Naive thymus-derived CD4-positive, alpha-beta T cell (primary cell): ENCODE measurements at regions of chr10 and their contacts with region 1.

Region 1: GRCh38 chr10:7471720-7472367 is 61.0 kb upstream of the SFMBT2 start:
- DNase-seq: peak in 4 of 9 donors; percentile 6 to 19 (median 10)
- ATAC-seq: peak; percentile 72
- H3K4me3 ChIP-seq: peak overlapping the region; percentile 62
- H3K4me3 Mint-ChIP-seq: peak overlapping the region; percentile 73 to 93 (median 88)
- H3K27ac ChIP-seq: peak overlapping the region; percentile 51
- H3K27ac Mint-ChIP-seq: peak overlapping the region in 8 of 9 donors; percentile 72 to 91 (median 85)
- H3K4me1 ChIP-seq: peaks cover 10 to 19% of the 10 kb centered on the region in 2 donors
- H3K4me1 Mint-ChIP-seq: peaks cover 23 to 55% (median 36%) of the 10 kb centered on the region in 7 donors
- H3K27me3 ChIP-seq: no peaks in the 10 kb centered on the region
- H3K27me3 Mint-ChIP-seq: peaks cover 0 to 2% (median 0%) of the 10 kb centered on the region in 5 donors

Region 2: DNA sequence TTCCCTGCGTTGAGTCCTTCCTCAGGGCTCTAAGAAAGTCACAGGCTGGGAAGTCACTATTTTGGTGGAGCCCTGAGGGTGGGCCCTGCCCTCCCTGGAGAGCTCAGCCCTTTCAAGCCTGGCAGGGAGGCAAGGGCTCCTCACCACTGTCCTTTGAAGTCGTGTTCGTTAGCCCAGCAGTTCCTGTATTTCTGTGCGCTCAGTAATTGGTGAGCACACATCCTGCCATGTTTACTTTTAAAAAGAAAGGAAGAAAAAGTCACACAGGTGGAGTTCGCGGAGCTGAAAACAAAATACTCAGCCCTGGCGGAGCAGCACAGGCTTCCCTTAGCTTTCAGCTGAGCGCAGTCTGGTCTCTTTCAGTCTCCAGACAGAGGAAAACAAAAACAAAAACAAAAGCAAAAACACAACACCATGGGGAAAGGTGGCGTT is 928.8 kb before region 1 on chr10:
- CTCF ChIA-PET with region 1: no interaction called
- POLR2A ChIA-PET with region 1: no interaction called
- intact Hi-C with region 1: no loop called
- DNase-seq: peak in 8 of 9 donors; percentile 45 to 83 (median 78)
- ATAC-seq: peak; percentile 90
- H3K4me3 ChIP-seq: peak overlapping the region; percentile 64
- H3K4me3 Mint-ChIP-seq: peak overlapping the region; percentile 79 to 95 (median 88)
- H3K27ac ChIP-seq: peak overlapping the region; percentile 73
- H3K27ac Mint-ChIP-seq: peak overlapping the region; percentile 97 to 100 (median 99)
- H3K4me1 ChIP-seq: peaks cover 55 to 66% of the 10 kb centered on the region in 2 donors
- H3K4me1 Mint-ChIP-seq: peaks cover 43 to 90% (median 76%) of the 10 kb centered on the region in 7 donors
- H3K27me3 ChIP-seq: no peaks in the 10 kb centered on the region
- H3K27me3 Mint-ChIP-seq: no peaks in the 10 kb centered on the region

Region 3: GRCh38 chr10:7507887-7508726 is 36.3 kb after region 1 on chr10:
- CTCF ChIA-PET with region 1: no interaction called
- POLR2A ChIA-PET with region 1: no interaction called
- intact Hi-C with region 1: loop called (anchors 5 kb)
- DNase-seq: peak in 7 of 9 donors; percentile 26 to 66 (median 51)
- ATAC-seq: peak; percentile 52
- H3K4me3 ChIP-seq: no peak overlapping the region
- H3K4me3 Mint-ChIP-seq: peak overlapping the region; percentile 7 to 90 (median 66)
- H3K27ac ChIP-seq: peak overlapping the region; percentile 64
- H3K27ac Mint-ChIP-seq: peak overlapping the region; percentile 84 to 97 (median 95)
- H3K4me1 ChIP-seq: peaks cover 24 to 34% of the 10 kb centered on the region in 2 donors
- H3K4me1 Mint-ChIP-seq: peaks cover 44 to 74% (median 60%) of the 10 kb centered on the region in 7 donors
- H3K27me3 ChIP-seq: no peaks in the 10 kb centered on the region
- H3K27me3 Mint-ChIP-seq: no peaks in the 10 kb centered on the region

Region 4: GRCh38 chr10:7577176-7577575 is 105.3 kb after region 1 on chr10:
- CTCF ChIA-PET with region 1: no interaction called
- POLR2A ChIA-PET with region 1: no interaction called
- intact Hi-C with region 1: no loop called
- DNase-seq: no peak
- ATAC-seq: no peak
- H3K4me3 ChIP-seq: no peak overlapping the region
- H3K4me3 Mint-ChIP-seq: no peak overlapping the region
- H3K27ac ChIP-seq: no peak overlapping the region
- H3K27ac Mint-ChIP-seq: no peak overlapping the region
- H3K4me1 ChIP-seq: no peaks in the 10 kb centered on the region
- H3K4me1 Mint-ChIP-seq: peaks cover 0 to 3% (median 0%) of the 10 kb centered on the region in 7 donors
- H3K27me3 ChIP-seq: no peaks in the 10 kb centered on the region
- H3K27me3 Mint-ChIP-seq: peaks cover 0 to 7% (median 0%) of the 10 kb centered on the region in 5 donors